ENCODE measurements at regions of chr16 and their contacts with region 1.

Region 1: GRCh38 chr16:3922276-3922675 is 41.8 kb upstream of the CREBBP start:
- DNase-seq: peak; percentile 65 to 70
- H3K4me3 ChIP-seq: no peak overlapping the region
- H3K27ac ChIP-seq: no peak overlapping the region
- H3K4me1 ChIP-seq: peaks cover 15% of the 10 kb centered on the region
- H3K27me3 ChIP-seq: 0 out of 2 replicates have a peak, but pooled peaks cover 5% of the 10 kb centered on the region
- CTCF ChIP-seq: no peak

Region 2: DNA sequence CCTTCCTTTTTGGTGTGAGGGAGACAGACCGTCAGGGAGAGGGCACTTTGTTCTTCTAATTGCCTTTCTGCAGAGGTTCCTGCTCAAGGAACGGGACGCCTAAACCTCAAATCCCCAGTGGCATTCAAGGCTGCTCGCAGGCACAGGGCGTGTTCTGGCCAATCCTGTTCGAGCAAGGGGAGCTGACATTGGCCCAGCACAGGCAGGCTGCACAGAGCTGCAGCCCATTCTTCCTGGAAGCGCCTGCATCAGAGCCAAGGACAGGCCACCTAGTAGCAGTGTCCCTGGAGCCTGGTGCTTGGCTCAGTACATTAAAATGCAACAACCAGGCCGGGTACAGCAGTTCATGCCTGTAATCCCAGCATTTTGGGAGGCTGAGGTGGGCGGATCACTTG is 30.5 kb after region 1 on chr16:
- CTCF ChIA-PET with region 1: no interaction called
- POLR2A ChIA-PET with region 1: interaction called, 10 read pairs
- intact Hi-C with region 1: no loop called
- DNase-seq: no peak
- H3K4me3 ChIP-seq: no peak overlapping the region
- H3K27ac ChIP-seq: no peak overlapping the region
- H3K4me1 ChIP-seq: no peaks in the 10 kb centered on the region
- H3K27me3 ChIP-seq: peaks cover 11% of the 10 kb centered on the region; the same call in 1 of the 2 replicates
- CTCF ChIP-seq: no peak

Region 3: GRCh38 chr16:4081521-4082021 is 159.3 kb after region 1 on chr16:
- CTCF ChIA-PET with region 1: no interaction called
- POLR2A ChIA-PET with region 1: no interaction called
- intact Hi-C with region 1: no loop called
- DNase-seq: no peak
- H3K4me3 ChIP-seq: no peak overlapping the region
- H3K27ac ChIP-seq: no peak overlapping the region
- H3K4me1 ChIP-seq: no peaks in the 10 kb centered on the region
- H3K27me3 ChIP-seq: no peaks in the 10 kb centered on the region
- CTCF ChIP-seq: no peak

Measured in PC-9 (cell line).